Colonic mucosa (tissue), 4 donors: ENCODE measurements at regions of chr1 and their contacts with region 1.

Region 1: GRCh38 chr1:167066333-167067122 is 23.6 kb downstream of the GPA33 start:
- DNase-seq: peak; percentile 86
- H3K4me3 ChIP-seq: no peak overlapping the region
- H3K27ac ChIP-seq: peak overlapping the region; percentile 66
- H3K4me1 ChIP-seq: peaks cover 8% of the 10 kb centered on the region
- H3K27me3 ChIP-seq: no peaks in the 10 kb centered on the region
- CTCF ChIP-seq: peak; percentile 98

Region 2: DNA sequence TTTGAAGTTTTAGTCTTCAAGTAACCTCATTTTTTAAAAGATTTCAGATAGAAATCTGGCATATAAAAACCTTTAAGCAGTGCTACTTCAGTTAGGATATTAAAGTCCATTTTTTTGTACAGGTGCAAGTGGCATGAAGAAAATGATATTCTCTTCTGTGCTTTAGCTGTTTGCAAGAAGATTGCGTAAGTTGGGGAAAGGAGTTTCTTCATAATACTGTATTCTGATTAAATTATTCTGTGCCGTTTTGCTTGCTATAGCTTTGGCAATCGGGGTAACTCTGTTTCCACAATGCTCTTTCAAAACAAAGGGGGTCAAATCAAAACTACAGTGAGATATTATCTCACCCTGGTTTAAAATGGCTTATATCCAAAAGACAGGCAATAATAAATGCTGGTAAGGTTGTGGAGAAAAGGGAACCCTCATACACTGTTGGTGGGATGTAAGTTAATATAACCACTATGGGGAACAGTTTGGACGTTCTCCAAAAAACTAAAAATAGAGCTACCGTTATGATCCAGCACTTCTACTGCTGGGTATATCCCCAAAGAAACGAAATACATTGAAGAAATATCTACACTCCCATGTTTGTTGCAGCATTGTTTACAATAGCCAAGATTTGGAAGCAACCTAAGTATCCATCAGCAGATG is 50.3 kb before region 1 on chr1:
- intact Hi-C with region 1: no loop called
- DNase-seq: no peak
- H3K4me3 ChIP-seq: no peak overlapping the region
- H3K27ac ChIP-seq: no peak overlapping the region
- H3K4me1 ChIP-seq: no peaks in the 10 kb centered on the region
- H3K27me3 ChIP-seq: no peaks in the 10 kb centered on the region
- CTCF ChIP-seq: no peak

Region 3: GRCh38 chr1:167114725-167115124 is 48.2 kb after region 1 on chr1:
- intact Hi-C with region 1: loop called (anchors 5 kb)
- DNase-seq: no peak
- H3K4me3 ChIP-seq: no peak overlapping the region
- H3K27ac ChIP-seq: no peak overlapping the region
- H3K4me1 ChIP-seq: no peaks in the 10 kb centered on the region
- H3K27me3 ChIP-seq: no peaks in the 10 kb centered on the region
- CTCF ChIP-seq: no peak

Region 4: GRCh38 chr1:167219646-167220536 is 153.4 kb after region 1 on chr1:
- intact Hi-C with region 1: loop called (anchors 5 kb)
- DNase-seq: peak; percentile 95
- H3K4me3 ChIP-seq: peak overlapping the region; percentile 79
- H3K27ac ChIP-seq: peak overlapping the region; percentile 92
- H3K4me1 ChIP-seq: no peaks in the 10 kb centered on the region
- H3K27me3 ChIP-seq: no peaks in the 10 kb centered on the region
- CTCF ChIP-seq: no peak

Region 5: GRCh38 chr1:167442124-167442848 is 375.8 kb after region 1 on chr1:
- intact Hi-C with region 1: loop called (anchors 5 kb)
- DNase-seq: peak; percentile 98
- H3K4me3 ChIP-seq: no peak overlapping the region
- H3K27ac ChIP-seq: peak overlapping the region; percentile 43
- H3K4me1 ChIP-seq: peaks cover 3% of the 10 kb centered on the region
- H3K27me3 ChIP-seq: no peaks in the 10 kb centered on the region
- CTCF ChIP-seq: peak; percentile 80